PC-3 (cell line): ENCODE measurements at regions of chr2 and their contacts with region 1.

Region 1: GRCh38 chr2:200713003-200713703 is 98.6 kb upstream of the BZW1 start:
- DNase-seq: peak; percentile 98
- ATAC-seq: peak; percentile 96
- H3K4me3 ChIP-seq: peak overlapping the region; percentile 33; the same call in 1 of the 2 replicates
- H3K27ac ChIP-seq: peak overlapping the region; percentile 91
- H3K4me1 ChIP-seq: peaks cover 9% of the 10 kb centered on the region
- H3K27me3 ChIP-seq: no peaks in the 10 kb centered on the region
- CTCF ChIP-seq: peak; percentile 95

Region 2: DNA sequence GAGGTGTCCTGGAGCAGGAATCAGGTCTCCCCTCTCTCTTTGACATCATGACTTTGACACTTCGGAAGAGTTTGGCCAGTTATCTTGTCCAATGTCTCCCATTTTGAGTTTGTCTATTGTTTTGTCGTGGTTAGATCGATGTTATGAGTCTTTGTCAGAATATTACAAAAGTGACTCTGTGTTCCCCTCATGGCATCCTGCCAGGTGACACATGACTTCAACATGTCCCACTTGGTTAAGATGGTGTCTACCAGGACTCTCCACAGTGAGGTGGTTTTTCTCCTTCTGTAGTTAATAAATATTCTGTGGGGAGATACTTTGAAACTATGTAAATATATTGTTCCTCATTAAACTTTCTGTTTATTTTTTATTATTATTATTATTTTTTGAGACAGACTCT is 21.9 kb after region 1 on chr2:
- CTCF ChIA-PET with region 1: interaction called, 17 read pairs
- POLR2A ChIA-PET with region 1: no interaction called
- intact Hi-C with region 1: loop called (anchors 1 kb)
- DNase-seq: peak; percentile 39
- ATAC-seq: no peak
- H3K4me3 ChIP-seq: no peak overlapping the region
- H3K27ac ChIP-seq: no peak overlapping the region
- H3K4me1 ChIP-seq: peaks cover 4% of the 10 kb centered on the region
- H3K27me3 ChIP-seq: no peaks in the 10 kb centered on the region
- CTCF ChIP-seq: no peak

Region 3: DNA sequence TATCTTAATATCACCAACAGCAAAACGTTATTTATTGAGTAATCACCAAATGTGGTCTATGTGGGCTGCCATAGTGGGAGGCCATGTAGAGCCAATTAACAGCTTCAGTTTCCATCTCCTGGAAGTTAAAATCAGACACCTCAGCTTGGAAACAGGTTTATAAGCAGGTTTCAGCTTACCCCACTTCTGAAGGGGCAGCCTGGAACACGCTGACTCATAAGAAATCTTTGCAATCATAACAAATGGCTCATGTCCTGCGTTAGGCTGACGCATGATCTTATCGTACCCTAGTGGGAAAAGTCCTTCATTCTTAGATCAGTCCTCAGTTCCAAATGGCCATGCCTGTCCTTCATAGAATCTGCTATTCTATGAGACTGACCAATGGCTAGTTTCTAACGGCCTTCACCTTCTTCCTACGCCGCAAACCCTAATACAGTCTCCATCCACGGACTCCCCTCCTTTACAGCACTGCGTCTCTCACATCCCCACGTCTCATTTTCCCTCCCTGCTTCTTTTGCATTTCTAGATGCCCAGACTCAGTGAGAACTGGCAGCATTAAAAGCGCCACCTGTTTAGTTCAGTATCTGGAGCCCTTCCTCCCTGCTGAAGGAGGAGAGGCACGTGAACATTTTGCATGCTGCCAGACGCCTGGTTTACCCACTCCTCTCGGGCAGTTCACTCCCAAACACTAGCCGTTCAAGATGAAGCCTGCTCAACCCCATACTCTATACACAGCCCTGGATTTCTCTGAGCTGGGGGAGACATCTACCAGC is 74.4 kb after region 1 on chr2:
- CTCF ChIA-PET with region 1: interaction called, 3 read pairs
- POLR2A ChIA-PET with region 1: no interaction called
- intact Hi-C with region 1: loop called (anchors 1 kb)
- DNase-seq: peak; percentile 96
- ATAC-seq: peak; percentile 66
- H3K4me3 ChIP-seq: peak overlapping the region; percentile 50
- H3K27ac ChIP-seq: peak overlapping the region; percentile 98
- H3K4me1 ChIP-seq: peaks cover 61% of the 10 kb centered on the region
- H3K27me3 ChIP-seq: no peaks in the 10 kb centered on the region
- CTCF ChIP-seq: no peak

Region 4: GRCh38 chr2:200829258-200829655 is 116.1 kb after region 1 on chr2:
- CTCF ChIA-PET with region 1: no interaction called
- POLR2A ChIA-PET with region 1: no interaction called
- intact Hi-C with region 1: loop called (anchors 1 kb)
- DNase-seq: peak; percentile 22
- ATAC-seq: peak; percentile 6
- H3K4me3 ChIP-seq: no peak overlapping the region
- H3K27ac ChIP-seq: no peak overlapping the region
- H3K4me1 ChIP-seq: no peaks in the 10 kb centered on the region
- H3K27me3 ChIP-seq: no peaks in the 10 kb centered on the region
- CTCF ChIP-seq: no peak

Region 5: DNA sequence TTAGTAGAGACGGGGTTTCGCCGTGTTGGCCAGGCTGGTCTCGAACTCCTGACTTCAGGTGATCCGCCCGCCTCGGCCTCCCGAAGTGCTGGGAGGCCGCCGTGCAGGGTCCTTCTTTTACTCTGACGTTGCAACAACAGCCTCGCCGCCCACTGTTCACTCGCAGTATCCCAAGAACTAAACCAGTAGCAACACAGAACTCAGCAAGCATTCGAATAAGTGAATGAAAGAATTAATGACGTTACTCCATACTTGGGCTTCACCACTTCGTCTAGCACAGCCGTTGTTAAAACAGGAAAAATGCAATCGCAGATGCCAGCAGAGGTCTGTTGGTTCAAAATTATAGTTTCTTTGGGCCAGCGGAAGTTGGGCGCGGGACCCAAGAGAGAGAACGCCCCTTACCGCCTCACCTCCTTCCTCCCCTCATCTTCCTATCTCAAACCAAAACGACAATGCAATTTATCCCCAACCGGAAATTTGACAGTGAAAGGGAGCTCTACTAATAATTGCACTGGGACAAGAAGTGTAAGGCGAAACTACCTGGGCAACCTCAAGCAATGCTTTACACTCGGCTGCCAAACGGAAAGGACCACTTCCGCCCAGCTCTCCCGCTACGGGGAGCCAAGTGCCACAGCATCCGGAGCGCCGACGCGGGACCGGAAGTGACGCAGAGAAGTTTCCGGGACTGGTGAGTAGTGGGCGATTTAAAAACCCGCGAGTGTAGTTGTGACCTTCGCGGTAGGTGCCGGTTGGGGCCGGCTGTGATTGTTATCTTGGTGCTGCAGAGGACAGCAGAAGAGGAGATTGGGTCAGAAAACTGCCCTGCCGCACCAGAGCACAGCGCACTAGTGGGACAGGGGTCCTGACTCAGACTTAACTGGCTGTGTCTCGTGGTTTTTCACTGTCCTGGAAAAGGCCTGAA is 175.8 kb after region 1 on chr2 and contains the starts of genes NIF3L1 and PPIL3:
- CTCF ChIA-PET with region 1: no interaction called
- POLR2A ChIA-PET with region 1: interaction called, 7 read pairs
- intact Hi-C with region 1: loop called (anchors 1 kb)
- DNase-seq: peak; percentile 99
- ATAC-seq: peak; percentile 82
- H3K4me3 ChIP-seq: peak within 1 kb of the TSS; percentile 87
- H3K27ac ChIP-seq: peak within 1 kb of the TSS; percentile 96
- H3K4me1 ChIP-seq: peaks cover 9% of the 10 kb centered on the region
- H3K27me3 ChIP-seq: no peaks in the 10 kb centered on the region
- CTCF ChIP-seq: no peak
- total RNA-seq, gene NIF3L1: 63.1 and 81.5 TPM in 2 replicates
- total RNA-seq, gene PPIL3: 25.9 and 37.1 TPM in 2 replicates

Region 6: DNA sequence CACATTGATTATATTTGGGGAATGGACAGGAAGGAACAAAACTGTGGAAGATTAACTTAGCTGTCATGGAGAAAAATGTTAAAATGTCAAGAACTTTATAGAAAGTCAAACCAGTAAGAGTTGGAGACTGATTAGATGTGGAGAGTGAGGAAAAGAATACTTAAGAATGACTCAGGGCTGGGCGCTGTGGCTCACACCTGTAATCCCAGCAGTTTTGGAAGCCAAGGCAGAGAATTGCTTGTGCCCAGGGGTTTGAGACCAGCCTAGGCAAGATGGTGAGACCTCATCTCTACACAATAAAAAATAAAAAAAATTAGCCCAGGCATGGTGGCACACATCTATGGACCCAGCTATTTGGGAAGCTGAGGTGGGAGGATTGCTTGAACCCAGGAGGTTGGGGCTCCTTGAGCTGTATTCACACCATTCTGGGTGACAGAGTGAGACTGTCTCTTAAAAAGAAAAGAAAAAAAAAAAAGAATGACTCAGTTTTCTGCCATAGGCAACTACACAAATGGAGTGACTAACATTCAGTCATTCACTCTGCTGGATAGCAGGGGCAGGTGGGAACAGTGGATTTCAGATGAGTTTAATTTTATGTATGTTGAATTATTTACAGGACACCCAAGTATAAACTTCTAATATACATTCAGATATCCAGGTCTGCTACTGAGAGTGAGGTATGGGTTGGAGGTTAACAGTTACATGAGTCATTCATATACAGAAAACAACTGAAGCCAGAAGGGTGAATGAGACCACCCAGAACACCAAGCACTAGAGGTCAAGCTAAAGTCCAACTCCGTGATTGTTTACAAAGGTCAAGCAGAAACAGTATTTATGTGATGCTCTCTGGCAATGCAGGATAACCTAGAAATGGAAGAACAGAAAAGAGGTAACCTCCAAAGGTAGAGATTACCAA is 216.4 kb after region 1 on chr2:
- CTCF ChIA-PET with region 1: no interaction called
- POLR2A ChIA-PET with region 1: no interaction called
- intact Hi-C with region 1: no loop called
- DNase-seq: peak; percentile 34
- ATAC-seq: peak; percentile 46; the same call in 1 of the 2 replicates
- H3K4me3 ChIP-seq: no peak overlapping the region
- H3K27ac ChIP-seq: no peak overlapping the region
- H3K4me1 ChIP-seq: 0 out of 2 replicates have a peak, but pooled peaks cover 3% of the 10 kb centered on the region
- H3K27me3 ChIP-seq: no peaks in the 10 kb centered on the region
- CTCF ChIP-seq: no peak